Activated CD4-positive, alpha-beta memory T cell treated with anti-CD3 and anti-CD28 coated beads, Interleukin-2, amount 10 ng/mL, durations not matched to agents 7 days and 5 days (primary cell): ENCODE measurements at regions of chr6 and their contacts with region 1.

Region 1: DNA sequence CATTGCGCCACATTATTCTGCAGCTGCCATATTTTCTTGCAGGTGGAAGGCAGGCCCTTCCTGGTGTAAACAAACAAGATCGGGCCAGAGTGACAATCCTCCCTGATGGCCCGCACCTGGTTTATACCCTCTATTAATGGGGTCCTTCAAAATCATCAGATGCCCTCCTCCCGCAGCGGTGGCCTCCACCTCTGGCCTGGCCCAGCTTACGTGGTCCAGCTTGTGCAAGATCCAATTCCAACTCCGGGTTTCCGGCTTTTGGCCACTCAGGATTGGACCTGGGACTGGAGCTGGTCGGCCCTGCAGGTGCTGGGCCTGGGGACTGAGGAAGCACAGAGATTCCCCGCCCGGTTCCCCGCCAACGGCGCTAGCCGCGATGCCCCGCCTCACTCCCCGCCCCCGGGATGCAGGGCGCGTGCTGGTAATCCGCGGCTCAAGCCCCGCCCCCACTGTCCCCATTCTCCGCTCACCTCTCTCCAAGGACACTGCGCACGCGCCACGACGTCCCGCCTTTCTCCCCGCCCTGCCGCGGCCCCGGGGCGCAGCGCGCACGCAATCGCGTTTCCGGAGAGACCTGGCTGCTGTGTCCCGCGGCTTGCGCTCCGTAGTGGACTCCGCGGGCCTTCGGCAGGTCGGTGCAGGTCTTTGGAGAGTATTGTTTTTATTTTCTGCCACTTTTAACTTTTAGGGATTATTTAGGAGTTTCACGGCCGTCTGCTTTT is at the start of gene TMEM14B:
- DNase-seq: peak; percentile 100
- H3K4me3 Mint-ChIP-seq: peak within 1 kb of the TSS; percentile 93
- H3K27ac Mint-ChIP-seq: peak within 1 kb of the TSS; percentile 90
- H3K4me1 Mint-ChIP-seq: peaks cover 50% of the 10 kb centered on the region
- H3K27me3 Mint-ChIP-seq: no peaks in the 10 kb centered on the region
- total RNA-seq, gene TMEM14B: 81.5 to 83.6 TPM

Region 2: GRCh38 chr6:10465629-10466504 is 281.5 kb before region 1 on chr6:
- CTCF ChIA-PET with region 1: no interaction called
- POLR2A ChIA-PET with region 1: no interaction called
- DNase-seq: peak; percentile 21
- H3K4me3 Mint-ChIP-seq: no peak overlapping the region
- H3K27ac Mint-ChIP-seq: no peak overlapping the region
- H3K4me1 Mint-ChIP-seq: no peaks in the 10 kb centered on the region
- H3K27me3 Mint-ChIP-seq: peaks cover 10% of the 10 kb centered on the region

Region 3: DNA sequence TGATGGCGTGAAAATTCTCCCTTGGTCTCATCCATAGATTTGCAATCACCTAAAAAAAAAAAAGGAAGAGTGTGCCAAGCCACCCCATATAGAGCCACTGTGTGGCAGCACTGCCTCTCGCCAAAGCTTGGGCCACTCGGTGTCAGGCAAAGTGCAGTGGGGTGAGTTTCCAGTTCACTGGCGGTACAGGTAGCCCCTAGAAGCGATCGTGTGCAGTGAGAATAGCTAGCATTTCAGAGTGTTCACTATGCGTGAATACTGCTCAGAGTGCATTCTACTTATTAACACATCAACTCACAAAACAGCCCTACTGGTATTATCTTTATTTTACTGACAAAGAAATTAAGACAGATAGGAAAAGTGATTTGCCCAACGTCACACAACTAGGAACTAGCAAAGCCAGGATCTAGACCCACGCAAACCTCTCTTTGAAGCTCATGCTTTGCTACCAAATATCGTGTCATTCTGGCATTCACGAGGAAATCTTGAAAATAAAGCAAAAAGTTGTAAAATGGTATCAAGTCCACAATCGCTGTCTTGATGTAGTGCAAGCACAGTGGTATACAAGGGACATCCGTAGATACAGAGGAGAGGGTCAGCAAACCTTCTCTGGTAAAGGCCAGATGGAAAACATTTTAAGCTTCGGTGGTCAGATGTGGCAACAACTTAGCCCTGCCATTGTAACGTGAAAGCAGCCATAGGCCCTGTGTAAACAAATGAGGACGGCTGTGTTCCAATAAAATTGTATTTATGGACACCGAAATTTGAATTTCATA is 236.6 kb before region 1 on chr6:
- CTCF ChIA-PET with region 1: no interaction called
- POLR2A ChIA-PET with region 1: no interaction called
- DNase-seq: peak; percentile 36
- H3K4me3 Mint-ChIP-seq: no peak overlapping the region
- H3K27ac Mint-ChIP-seq: no peak overlapping the region
- H3K4me1 Mint-ChIP-seq: peaks cover 3% of the 10 kb centered on the region
- H3K27me3 Mint-ChIP-seq: peaks cover 5% of the 10 kb centered on the region

Region 4: DNA sequence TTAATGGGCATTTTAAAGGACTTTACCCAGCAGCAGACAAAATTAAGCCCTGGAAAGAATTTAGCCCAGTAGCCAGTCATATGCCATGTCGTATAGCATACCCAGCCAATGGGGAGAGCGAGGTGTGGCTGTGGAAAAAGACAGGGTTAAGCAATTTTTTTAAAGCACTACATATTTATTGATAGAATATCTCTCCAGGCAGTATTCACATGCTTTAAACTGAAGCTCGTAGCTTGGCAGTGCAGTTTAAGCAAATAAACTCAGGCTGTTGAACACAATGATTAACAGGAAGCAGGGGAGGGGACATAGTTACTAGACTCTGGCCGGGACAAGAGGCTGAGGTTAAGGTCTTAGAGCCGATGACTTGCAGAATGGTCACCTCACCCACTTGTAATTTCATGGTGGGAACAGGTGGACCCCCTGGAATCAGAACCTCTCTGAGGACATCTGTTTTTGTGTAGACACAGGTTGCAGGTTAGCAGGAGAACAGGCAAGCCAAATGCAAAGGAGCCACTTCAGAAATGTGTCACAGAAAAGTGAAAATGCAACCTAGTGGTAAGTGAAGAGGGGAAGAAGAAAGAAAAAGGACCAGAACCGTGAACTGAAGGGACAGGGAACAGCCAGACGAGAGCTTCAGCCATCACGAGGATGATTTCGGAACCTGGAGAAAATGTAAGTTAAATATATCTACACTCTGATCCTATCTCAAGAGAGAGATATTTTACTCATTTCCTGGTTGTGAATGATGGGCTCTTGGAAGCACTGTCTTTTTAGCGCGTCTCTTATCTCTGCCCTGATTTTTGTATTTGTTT is 219.0 kb before region 1 on chr6:
- CTCF ChIA-PET with region 1: no interaction called
- POLR2A ChIA-PET with region 1: interaction called, 13 read pairs
- DNase-seq: peak; percentile 41
- H3K4me3 Mint-ChIP-seq: peak overlapping the region; percentile 78
- H3K27ac Mint-ChIP-seq: peak overlapping the region; percentile 76
- H3K4me1 Mint-ChIP-seq: peaks cover 43% of the 10 kb centered on the region
- H3K27me3 Mint-ChIP-seq: peaks cover 3% of the 10 kb centered on the region

Region 5: GRCh38 chr6:10694302-10695085 is 52.9 kb before region 1 on chr6 and contains the starts of genes C6orf52 and PAK1IP1:
- CTCF ChIA-PET with region 1: interaction called, 4 read pairs
- POLR2A ChIA-PET with region 1: interaction called, 39 read pairs
- DNase-seq: peak; percentile 94
- H3K4me3 Mint-ChIP-seq: peak within 1 kb of the TSS; percentile 86
- H3K27ac Mint-ChIP-seq: peak within 1 kb of the TSS; percentile 98
- H3K4me1 Mint-ChIP-seq: peaks cover 42% of the 10 kb centered on the region
- H3K27me3 Mint-ChIP-seq: no peaks in the 10 kb centered on the region
- total RNA-seq, gene C6orf52: 0.88 to 1.6 TPM
- total RNA-seq, gene PAK1IP1: 10.1 to 10.9 TPM

Region 6: DNA sequence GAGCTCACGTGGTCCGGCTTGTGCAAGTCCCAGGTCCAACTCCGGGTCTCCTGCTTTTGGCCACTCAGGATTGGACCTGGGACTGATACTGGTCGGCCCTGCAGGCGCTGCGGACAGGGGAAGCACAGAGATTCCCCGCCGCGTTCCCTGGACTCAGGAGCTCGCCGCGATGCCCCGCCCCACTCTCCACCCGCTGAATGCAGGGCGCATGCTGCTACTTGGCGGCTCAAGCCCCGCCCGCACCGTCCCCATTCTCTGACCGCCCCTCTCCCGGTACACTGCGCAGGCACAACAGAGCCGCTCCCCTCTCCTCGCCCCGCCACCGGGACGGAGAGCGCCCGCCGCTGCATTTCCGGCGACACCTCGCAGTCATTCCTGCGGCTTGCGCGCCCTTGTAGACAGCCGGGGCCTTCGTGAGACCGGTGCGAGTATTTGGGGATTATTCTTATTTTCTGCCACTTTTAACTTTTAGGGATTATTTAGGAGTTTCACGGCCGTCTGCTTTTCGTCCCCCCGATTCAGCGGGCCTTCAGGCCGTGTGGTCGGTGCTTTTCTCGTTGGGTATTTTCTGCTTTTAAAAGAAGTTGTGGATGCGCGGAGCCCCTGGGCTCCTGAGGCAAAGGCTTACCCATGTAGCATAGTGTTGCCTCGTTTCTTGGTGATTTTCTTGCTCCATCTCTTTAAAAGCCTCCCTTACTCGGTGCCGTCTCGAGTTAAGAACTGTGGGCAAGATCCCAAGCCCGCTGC is 24.4 kb before region 1 on chr6 and contains the start of gene TMEM14C:
- CTCF ChIA-PET with region 1: interaction called, 3 read pairs
- POLR2A ChIA-PET with region 1: interaction called, 86 read pairs
- DNase-seq: peak; percentile 87
- H3K4me3 Mint-ChIP-seq: peak within 1 kb of the TSS; percentile 95
- H3K27ac Mint-ChIP-seq: peak within 1 kb of the TSS; percentile 88
- H3K4me1 Mint-ChIP-seq: peaks cover 55% of the 10 kb centered on the region
- H3K27me3 Mint-ChIP-seq: no peaks in the 10 kb centered on the region
- total RNA-seq, gene TMEM14C: 42.4 to 46.5 TPM

Region 7: GRCh38 chr6:10759312-10759839 is 12.0 kb after region 1 on chr6:
- CTCF ChIA-PET with region 1: interaction called, 18 read pairs
- POLR2A ChIA-PET with region 1: interaction called, 11 read pairs
- DNase-seq: no peak
- H3K4me3 Mint-ChIP-seq: no peak overlapping the region
- H3K27ac Mint-ChIP-seq: no peak overlapping the region
- H3K4me1 Mint-ChIP-seq: peaks cover 22% of the 10 kb centered on the region
- H3K27me3 Mint-ChIP-seq: no peaks in the 10 kb centered on the region

Region 8: DNA sequence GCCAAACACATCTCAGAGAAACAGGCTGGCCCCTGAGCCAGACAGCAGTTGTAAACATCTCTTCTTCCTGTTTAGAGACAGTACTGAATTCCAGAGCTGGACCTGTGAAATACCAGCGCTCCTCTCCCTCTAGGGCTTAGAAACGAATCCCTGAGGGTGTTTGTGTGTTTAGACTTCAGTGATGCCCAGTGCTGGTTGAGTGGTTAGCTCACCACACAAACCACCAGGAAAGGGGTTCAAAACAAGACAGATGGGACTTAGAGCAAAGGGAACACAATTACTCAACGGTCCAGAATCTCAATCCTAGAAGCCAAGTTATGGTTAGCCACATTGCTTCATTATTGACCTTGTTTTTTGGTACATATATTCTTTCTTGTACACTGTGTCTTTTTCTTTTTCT is 681.5 kb after region 1 on chr6:
- CTCF ChIA-PET with region 1: no interaction called
- POLR2A ChIA-PET with region 1: no interaction called
- DNase-seq: no peak
- H3K4me3 Mint-ChIP-seq: no peak overlapping the region
- H3K27ac Mint-ChIP-seq: no peak overlapping the region
- H3K4me1 Mint-ChIP-seq: peaks cover 25% of the 10 kb centered on the region
- H3K27me3 Mint-ChIP-seq: peaks cover 2% of the 10 kb centered on the region